Activated T-helper 2 cell treated with anti-CD3 and anti-CD28 coated beads, Interferon-gamma antibody, Interleukin-2, Interleukin-4, amounts not matched to agents 10 μg/mL and 5 μg/mL and 100 μg/mL, durations not matched to agents 14 hours and 24 hours and 36 hours (primary cell): ENCODE measurements at regions of chr7 and their contacts with region 1.

Region 1: GRCh38 chr7:129530795-129531391 is 28.6 kb downstream of the SMKR1 start:
- DNase-seq: no peak
- H3K4me3 Mint-ChIP-seq: no peak overlapping the region
- H3K27ac Mint-ChIP-seq: peak overlapping the region; percentile 59
- H3K4me1 Mint-ChIP-seq: peaks cover 13% of the 10 kb centered on the region
- H3K27me3 Mint-ChIP-seq: no peaks in the 10 kb centered on the region

Region 2: GRCh38 chr7:129502376-129502776 is 28.5 kb before region 1 on chr7 and contains the start of gene SMKR1:
- intact Hi-C with region 1: loop called (anchors 2 kb)
- DNase-seq: peak; percentile 87
- H3K4me3 Mint-ChIP-seq: peak within 1 kb of the TSS; percentile 82
- H3K27ac Mint-ChIP-seq: peak within 1 kb of the TSS; percentile 71
- H3K4me1 Mint-ChIP-seq: peaks cover 24% of the 10 kb centered on the region
- H3K27me3 Mint-ChIP-seq: peaks cover 7% of the 10 kb centered on the region
- total RNA-seq, gene SMKR1: 4.7 and 6.8 TPM in 2 replicates

Region 3: DNA sequence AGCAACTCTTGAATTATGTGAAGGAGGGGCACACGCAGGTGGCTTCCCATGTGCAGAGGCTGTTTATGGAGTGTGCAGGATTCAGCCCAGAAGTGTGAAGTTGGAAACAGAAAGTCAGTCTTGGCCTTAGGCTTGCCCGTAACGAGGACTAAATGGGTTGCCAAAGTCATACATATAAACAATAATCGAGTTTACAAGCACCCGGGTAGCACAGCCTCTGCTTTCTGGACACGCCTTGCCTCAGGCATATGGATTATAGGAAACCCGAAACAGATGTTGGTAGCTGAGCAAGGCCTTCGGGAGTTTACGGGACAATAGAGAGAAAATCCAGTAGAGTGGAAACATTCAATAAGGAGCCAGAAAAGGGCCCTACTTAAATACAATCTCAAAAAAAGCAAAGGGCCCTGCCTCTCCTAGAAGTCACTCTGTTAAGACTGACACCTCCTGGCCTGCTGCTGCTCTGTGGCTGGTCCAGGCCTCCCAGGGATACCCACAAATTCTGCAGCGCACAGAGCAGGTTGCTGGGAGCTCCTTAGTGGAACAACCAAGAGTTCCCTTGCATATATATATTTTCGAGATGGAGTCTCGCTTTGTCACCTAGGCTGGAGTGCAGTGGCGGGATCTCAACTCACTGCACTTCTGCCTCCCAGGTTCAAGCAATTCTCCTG is 19.9 kb after region 1 on chr7:
- intact Hi-C with region 1: no loop called
- DNase-seq: no peak
- H3K4me3 Mint-ChIP-seq: no peak overlapping the region
- H3K27ac Mint-ChIP-seq: no peak overlapping the region
- H3K4me1 Mint-ChIP-seq: peaks cover 5% of the 10 kb centered on the region
- H3K27me3 Mint-ChIP-seq: peaks cover 13% of the 10 kb centered on the region